ENCODE measurements at regions of chr3 and their contacts with region 1.

Region 1: DNA sequence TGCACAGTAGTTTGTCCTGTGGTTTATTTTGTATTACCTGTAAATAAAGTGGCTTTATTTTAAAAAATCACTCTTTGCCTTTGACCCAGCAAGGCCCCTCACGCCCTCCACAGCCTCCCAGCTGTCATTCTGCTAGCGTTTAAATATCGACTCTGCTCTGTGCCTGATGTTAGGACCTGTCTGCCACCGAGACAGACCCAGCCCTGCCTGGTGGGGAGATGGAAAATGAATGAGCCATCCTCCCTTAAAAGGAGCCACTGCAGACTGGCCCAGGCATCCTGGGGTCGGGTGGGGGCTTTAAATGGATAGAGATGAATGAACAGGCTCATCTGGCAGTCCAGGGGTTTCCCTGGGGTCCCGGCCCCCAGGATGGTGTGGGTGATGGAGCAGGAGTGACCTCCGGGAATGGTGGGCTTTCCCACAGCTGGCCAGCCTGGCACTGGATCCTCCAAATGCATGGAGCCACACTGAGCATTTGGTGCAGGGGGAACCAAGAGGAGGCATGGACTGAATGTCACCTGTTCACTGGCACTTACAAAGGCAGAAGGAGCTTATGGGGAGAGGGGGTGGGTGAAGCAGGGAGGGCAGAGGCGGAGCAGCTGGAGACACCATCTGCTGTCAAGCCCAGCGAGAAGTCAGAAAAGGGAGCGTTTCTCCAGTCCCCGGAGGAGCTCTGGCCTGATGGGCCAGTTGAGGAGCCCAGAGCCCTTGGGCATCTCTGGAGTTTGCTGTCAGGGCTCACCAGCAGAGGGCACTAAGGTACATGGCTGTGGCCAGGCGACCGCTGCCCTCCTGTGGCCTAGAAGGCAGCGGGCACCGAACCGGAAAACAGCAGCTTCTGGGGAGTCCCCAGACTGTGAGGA is 11.9 kb downstream of the GRM2 start:
- DNase-seq: peak; percentile 84
- H3K4me3 Mint-ChIP-seq: no peak overlapping the region
- H3K27ac Mint-ChIP-seq: no peak overlapping the region
- H3K4me1 Mint-ChIP-seq: no peaks in the 10 kb centered on the region
- H3K27me3 Mint-ChIP-seq: peaks cover 21% of the 10 kb centered on the region
- CTCF ChIP-seq: peak; percentile 92

Region 2: GRCh38 chr3:51670823-51671733 is 47.7 kb before region 1 on chr3 and contains the start of gene TEX264:
- CTCF ChIA-PET with region 1: no interaction called
- intact Hi-C with region 1: no loop called
- DNase-seq: peak; percentile 89
- H3K4me3 Mint-ChIP-seq: peak within 1 kb of the TSS; percentile 97
- H3K27ac Mint-ChIP-seq: peak within 1 kb of the TSS; percentile 76
- H3K4me1 Mint-ChIP-seq: peaks cover 26% of the 10 kb centered on the region
- H3K27me3 Mint-ChIP-seq: no peaks in the 10 kb centered on the region
- CTCF ChIP-seq: no peak
- total RNA-seq, gene TEX264: 37.0 and 44.9 TPM in 2 replicates

Region 3: GRCh38 chr3:51799879-51800749 is 81.3 kb after region 1 on chr3:
- CTCF ChIA-PET with region 1: interaction called, 30 read pairs
- intact Hi-C with region 1: loop called (anchors 1 kb)
- DNase-seq: peak; percentile 59
- H3K4me3 Mint-ChIP-seq: no peak overlapping the region
- H3K27ac Mint-ChIP-seq: no peak overlapping the region
- H3K4me1 Mint-ChIP-seq: peaks cover 8% of the 10 kb centered on the region
- H3K27me3 Mint-ChIP-seq: peaks cover 11% of the 10 kb centered on the region
- CTCF ChIP-seq: peak; percentile 58